ENCODE measurements at regions of chr1 and their contacts with region 1.

Region 1: DNA sequence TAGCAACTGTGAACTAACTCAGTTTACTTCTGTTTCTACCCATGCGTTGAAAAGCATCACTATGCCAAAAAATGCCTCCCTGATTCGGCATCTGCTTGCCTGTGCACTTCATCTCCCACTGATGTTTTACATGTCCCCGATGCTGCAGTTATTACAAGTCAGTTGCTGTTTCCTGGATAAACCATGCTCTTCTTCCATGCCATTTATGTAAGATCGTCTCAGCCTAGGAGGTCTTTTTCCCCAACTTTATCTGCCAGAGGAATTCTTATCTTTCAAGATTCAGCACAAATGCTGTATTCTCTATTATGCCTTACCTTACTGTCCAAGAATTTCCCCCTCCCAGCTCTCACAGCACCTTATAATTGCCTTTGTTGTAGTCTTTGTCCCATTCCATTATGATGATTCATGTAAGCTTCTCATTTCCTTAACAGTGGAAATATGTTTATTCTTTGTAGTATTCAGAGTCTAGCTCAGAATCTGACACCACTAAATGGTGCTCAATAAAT is 30.0 kb downstream of the PRKACB start:
- DNase-seq: peak; percentile 94
- ATAC-seq: peak; percentile 90
- H3K4me3 ChIP-seq: peak overlapping the region; percentile 33 to 45
- H3K27ac ChIP-seq: peak overlapping the region; percentile 99
- H3K4me1 ChIP-seq: peaks cover 89 to 97% of the 10 kb centered on the region in 2 experiments
- H3K27me3 ChIP-seq: no peaks in the 10 kb centered on the region
- CTCF ChIP-seq: no peak
- POLR2A ChIP-seq: no peak
- RAD21 ChIP-seq: peak; percentile 39

Region 2: GRCh38 chr1:84163123-84163931 is 10.8 kb before region 1 on chr1:
- CTCF ChIA-PET with region 1: no interaction called
- POLR2A ChIA-PET with region 1: interaction called, 10 read pairs
- RAD21 ChIA-PET with region 1: no interaction called
- intact Hi-C with region 1: no loop called
- DNase-seq: no peak
- ATAC-seq: peak; percentile 40
- H3K4me3 ChIP-seq: no peak overlapping the region
- H3K27ac ChIP-seq: peak overlapping the region; percentile 99
- H3K4me1 ChIP-seq: peaks cover 82 to 96% of the 10 kb centered on the region in 2 experiments
- H3K27me3 ChIP-seq: no peaks in the 10 kb centered on the region
- CTCF ChIP-seq: no peak
- POLR2A ChIP-seq: no peak
- RAD21 ChIP-seq: no peak

Measured in HCT116 (cell line).